GM12878 (cell line): ENCODE measurements at regions of chr10 and their contacts with region 1.

Region 1: GRCh38 chr10:27661514-27662286 is 83.9 kb downstream of the MKX start:
- DNase-seq: no peak
- ATAC-seq: no peak
- H3K4me3 ChIP-seq: no peak overlapping the region
- H3K27ac ChIP-seq: no peak overlapping the region
- H3K4me1 ChIP-seq: no peaks in the 10 kb centered on the region
- H3K27me3 ChIP-seq: no peaks in the 10 kb centered on the region
- CTCF ChIP-seq: no peak
- EP300 ChIP-seq: no peak
- POLR2A ChIP-seq: no peak
- RAD21 ChIP-seq: no peak

Region 2: DNA sequence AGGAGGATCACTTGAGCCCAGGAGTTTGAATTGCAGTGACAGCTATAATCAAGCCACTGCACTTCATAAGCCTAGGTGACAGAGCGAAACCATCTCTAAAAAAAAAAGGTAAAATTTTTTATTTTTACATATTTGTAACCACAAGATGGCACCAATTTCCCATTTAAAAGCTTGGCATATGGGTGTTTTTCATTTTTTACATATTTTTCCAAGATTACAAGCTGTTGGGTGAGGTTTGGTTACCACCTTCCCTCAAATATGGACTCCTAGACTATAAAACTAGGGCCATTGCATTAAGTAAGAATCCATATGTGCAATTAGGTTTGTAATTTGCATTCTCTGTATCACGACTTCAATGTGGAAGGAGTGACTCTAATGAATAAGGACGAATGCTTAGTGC is 291.8 kb before region 1 on chr10:
- CTCF ChIA-PET with region 1: interaction called, 6 read pairs
- POLR2A ChIA-PET with region 1: no interaction called
- RAD21 ChIA-PET with region 1: no interaction called
- SMC1A ChIA-PET with region 1: no interaction called
- in situ Hi-C with region 1: no loop called
- intact Hi-C with region 1: loop called (anchors 5 kb)
- DNase-seq: no peak
- ATAC-seq: peak; percentile 27; the same call in 2 of the 3 replicates
- H3K4me3 ChIP-seq: no peak overlapping the region
- H3K27ac ChIP-seq: no peak overlapping the region
- H3K4me1 ChIP-seq: 0 out of 2 replicates have a peak, but pooled peaks cover 6% of the 10 kb centered on the region
- H3K27me3 ChIP-seq: 0 out of 4 replicates have a peak, but pooled peaks cover 0 to 1% of the 10 kb centered on the region in 2 experiments
- CTCF ChIP-seq: no peak; a peak in 1 of 6 replicates
- EP300 ChIP-seq: no peak
- POLR2A ChIP-seq: no peak
- RAD21 ChIP-seq: peak; percentile 20; the same call in 1 of the 2 replicates

Region 3: GRCh38 chr10:27426948-27427467 is 234.7 kb before region 1 on chr10:
- CTCF ChIA-PET with region 1: no interaction called
- POLR2A ChIA-PET with region 1: no interaction called
- RAD21 ChIA-PET with region 1: no interaction called
- SMC1A ChIA-PET with region 1: no interaction called
- in situ Hi-C with region 1: no loop called
- intact Hi-C with region 1: no loop called
- DNase-seq: no peak
- ATAC-seq: no peak
- H3K4me3 ChIP-seq: no peak overlapping the region
- H3K27ac ChIP-seq: no peak overlapping the region
- H3K4me1 ChIP-seq: no peaks in the 10 kb centered on the region
- H3K27me3 ChIP-seq: no peaks in the 10 kb centered on the region
- CTCF ChIP-seq: no peak
- EP300 ChIP-seq: no peak
- POLR2A ChIP-seq: no peak
- RAD21 ChIP-seq: no peak

Region 4: GRCh38 chr10:27558612-27559020 is 103.1 kb before region 1 on chr10:
- CTCF ChIA-PET with region 1: no interaction called
- POLR2A ChIA-PET with region 1: no interaction called
- RAD21 ChIA-PET with region 1: no interaction called
- SMC1A ChIA-PET with region 1: interaction called, 3 read pairs
- in situ Hi-C with region 1: loop called (anchors 5 kb)
- intact Hi-C with region 1: loop called (anchors 2 kb)
- DNase-seq: no peak
- ATAC-seq: peak; percentile 87
- H3K4me3 ChIP-seq: no peak overlapping the region
- H3K27ac ChIP-seq: no peak overlapping the region
- H3K4me1 ChIP-seq: no peaks in the 10 kb centered on the region
- H3K27me3 ChIP-seq: no peaks in the 10 kb centered on the region
- CTCF ChIP-seq: peak; percentile 53 to 70 (median 57); a peak in 5 of 6 replicates
- EP300 ChIP-seq: no peak
- POLR2A ChIP-seq: no peak
- RAD21 ChIP-seq: peak; percentile 81